ENCODE measurements at regions of chr1 and their contacts with region 1.

Region 1: DNA sequence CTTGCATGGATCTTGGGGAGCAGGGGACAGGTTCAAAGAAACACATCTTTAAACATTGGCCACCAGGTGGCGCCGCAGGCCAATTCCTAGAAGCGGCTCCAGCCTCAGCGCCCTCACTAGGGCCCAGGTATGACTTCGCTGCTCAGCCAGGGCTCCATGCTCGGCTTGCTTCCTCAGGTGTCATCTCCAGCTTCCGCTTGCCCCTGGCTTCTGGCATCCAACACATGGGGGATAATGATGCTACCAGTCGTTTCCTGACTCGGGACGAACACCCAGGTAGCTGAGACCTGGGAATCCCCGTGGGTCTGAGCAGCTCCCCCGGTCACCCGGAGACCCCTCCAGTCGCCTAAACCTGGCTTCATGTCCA is 8.5 kb upstream of the MEX3A start:
- DNase-seq: peak; percentile 79 to 95 (median 89)
- ATAC-seq: peak; percentile 98
- H3K4me3 ChIP-seq: no peak overlapping the region
- H3K4me3 Mint-ChIP-seq: no peak overlapping the region
- H3K27ac ChIP-seq: no peak overlapping the region
- H3K27ac Mint-ChIP-seq: no peak overlapping the region
- H3K4me1 ChIP-seq: peaks cover 10% of the 10 kb centered on the region
- H3K4me1 Mint-ChIP-seq: peaks cover 3% of the 10 kb centered on the region
- H3K27me3 ChIP-seq: peaks cover 0 to 3% of the 10 kb centered on the region in 2 experiments
- H3K27me3 Mint-ChIP-seq: peaks cover 18% of the 10 kb centered on the region
- CTCF ChIP-seq: peak; percentile 76

Region 2: GRCh38 chr1:155834296-155834926 is 256.4 kb before region 1 on chr1:
- CTCF ChIA-PET with region 1: no interaction called
- POLR2A ChIA-PET with region 1: no interaction called
- intact Hi-C with region 1: no loop called
- DNase-seq: no peak
- ATAC-seq: no peak
- H3K4me3 ChIP-seq: no peak overlapping the region
- H3K4me3 Mint-ChIP-seq: no peak overlapping the region
- H3K27ac ChIP-seq: no peak overlapping the region
- H3K27ac Mint-ChIP-seq: peak overlapping the region; percentile 52
- H3K4me1 ChIP-seq: no peaks in the 10 kb centered on the region
- H3K4me1 Mint-ChIP-seq: peaks cover 29% of the 10 kb centered on the region
- H3K27me3 ChIP-seq: no peaks in the 10 kb centered on the region
- H3K27me3 Mint-ChIP-seq: no peaks in the 10 kb centered on the region
- CTCF ChIP-seq: no peak

Region 3: GRCh38 chr1:156104065-156104810 is 13.4 kb after region 1 on chr1:
- CTCF ChIA-PET with region 1: interaction called, 37 read pairs
- POLR2A ChIA-PET with region 1: no interaction called
- intact Hi-C with region 1: no loop called
- DNase-seq: peak in 5 of 9 experiments; percentile 50 to 82 (median 61)
- ATAC-seq: no peak
- H3K4me3 ChIP-seq: no peak overlapping the region
- H3K4me3 Mint-ChIP-seq: peak overlapping the region; percentile 29
- H3K27ac ChIP-seq: no peak overlapping the region
- H3K27ac Mint-ChIP-seq: peak overlapping the region; percentile 52
- H3K4me1 ChIP-seq: peaks cover 28% of the 10 kb centered on the region
- H3K4me1 Mint-ChIP-seq: peaks cover 33% of the 10 kb centered on the region
- H3K27me3 ChIP-seq: no peaks in the 10 kb centered on the region
- H3K27me3 Mint-ChIP-seq: no peaks in the 10 kb centered on the region
- CTCF ChIP-seq: no peak

Region 4: GRCh38 chr1:156319664-156320063 is 228.9 kb after region 1 on chr1:
- CTCF ChIA-PET with region 1: interaction called, 4 read pairs
- POLR2A ChIA-PET with region 1: no interaction called
- intact Hi-C with region 1: loop called in 1 of 2 experiments (anchors 1 kb)
- DNase-seq: peak in 3 of 9 experiments; percentile 10 to 49 (median 36)
- ATAC-seq: no peak
- H3K4me3 ChIP-seq: no peak overlapping the region
- H3K4me3 Mint-ChIP-seq: no peak overlapping the region
- H3K27ac ChIP-seq: no peak overlapping the region
- H3K27ac Mint-ChIP-seq: no peak overlapping the region
- H3K4me1 ChIP-seq: no peaks in the 10 kb centered on the region
- H3K4me1 Mint-ChIP-seq: no peaks in the 10 kb centered on the region
- H3K27me3 ChIP-seq: no peaks in the 10 kb centered on the region
- H3K27me3 Mint-ChIP-seq: no peaks in the 10 kb centered on the region
- CTCF ChIP-seq: peak; percentile 54

Region 5: DNA sequence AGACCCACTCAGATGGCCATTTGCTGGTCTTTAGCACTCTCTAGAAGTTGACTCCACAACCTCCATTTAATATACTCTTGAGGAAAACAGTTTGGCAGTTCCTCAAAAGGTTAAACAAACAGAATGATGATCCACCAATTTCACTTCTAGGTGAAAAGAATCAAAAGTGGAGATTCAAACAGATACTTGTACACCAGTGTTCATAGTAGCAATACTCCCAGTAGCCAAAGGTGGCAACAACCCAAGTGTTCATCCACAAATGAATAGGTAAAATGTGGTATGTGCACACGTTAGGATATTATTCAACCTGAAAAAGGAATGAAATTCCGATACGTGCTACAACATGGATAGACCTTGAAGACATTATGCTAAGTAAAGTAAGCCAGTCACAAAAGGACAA is 682.8 kb after region 1 on chr1:
- CTCF ChIA-PET with region 1: no interaction called
- POLR2A ChIA-PET with region 1: no interaction called
- intact Hi-C with region 1: no loop called
- DNase-seq: no peak
- ATAC-seq: peak; percentile 55
- H3K4me3 ChIP-seq: no peak overlapping the region
- H3K4me3 Mint-ChIP-seq: no peak overlapping the region
- H3K27ac ChIP-seq: no peak overlapping the region
- H3K27ac Mint-ChIP-seq: no peak overlapping the region
- H3K4me1 ChIP-seq: peaks cover 37% of the 10 kb centered on the region
- H3K4me1 Mint-ChIP-seq: peaks cover 73% of the 10 kb centered on the region
- H3K27me3 ChIP-seq: no peaks in the 10 kb centered on the region
- H3K27me3 Mint-ChIP-seq: no peaks in the 10 kb centered on the region
- CTCF ChIP-seq: peak; percentile 27